PC-9 (cell line): ENCODE measurements at regions of chr2 and their contacts with region 1.

Region 1: DNA sequence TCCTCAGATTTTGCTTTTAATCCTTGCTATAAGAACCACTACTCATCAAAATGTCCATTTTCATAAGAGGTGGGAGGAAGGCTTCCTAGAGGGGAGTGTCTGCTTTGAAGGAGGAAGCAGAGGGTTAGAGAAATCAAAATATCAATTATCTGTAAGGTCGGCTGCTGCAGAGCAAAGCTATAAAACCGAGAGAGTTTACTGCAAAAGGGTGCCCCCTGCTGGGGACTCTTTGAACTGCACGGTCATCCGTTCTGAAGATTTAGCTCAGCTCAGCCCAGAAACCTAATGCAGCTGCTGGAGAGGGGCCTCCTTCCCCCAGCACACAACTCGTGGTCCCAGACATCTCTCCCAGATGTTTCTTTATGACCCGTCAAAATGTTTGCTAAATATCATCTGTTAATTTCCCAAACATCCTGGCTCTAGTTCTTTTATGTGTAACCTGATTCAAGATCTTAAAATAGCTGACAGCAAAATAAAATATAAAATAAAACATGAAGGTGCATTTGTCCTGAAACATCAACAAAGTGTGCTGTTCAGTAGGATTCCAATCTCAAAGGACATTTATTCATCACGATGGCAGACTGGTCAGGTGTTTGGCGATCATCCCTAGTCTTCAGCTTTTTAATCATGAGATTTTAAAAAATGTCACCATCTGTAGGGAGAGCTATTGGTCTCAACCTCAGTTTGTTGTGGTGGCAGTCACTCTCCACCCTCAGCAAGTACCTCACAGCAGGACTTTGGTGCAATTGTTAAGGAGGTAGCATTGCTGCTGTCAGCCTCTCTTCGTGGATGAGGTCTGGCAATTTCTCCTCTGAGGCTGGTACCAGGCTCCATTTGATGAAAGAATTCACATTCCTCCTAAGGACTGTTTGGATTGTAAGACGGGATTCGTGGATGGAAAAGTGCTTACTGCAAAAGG is 185.9 kb downstream of the MTX2 start:
- DNase-seq: peak; percentile 44 to 80
- H3K4me3 ChIP-seq: no peak overlapping the region
- H3K27ac ChIP-seq: no peak overlapping the region
- H3K4me1 ChIP-seq: no peaks in the 10 kb centered on the region
- H3K27me3 ChIP-seq: no peaks in the 10 kb centered on the region
- CTCF ChIP-seq: peak; percentile 100

Region 2: DNA sequence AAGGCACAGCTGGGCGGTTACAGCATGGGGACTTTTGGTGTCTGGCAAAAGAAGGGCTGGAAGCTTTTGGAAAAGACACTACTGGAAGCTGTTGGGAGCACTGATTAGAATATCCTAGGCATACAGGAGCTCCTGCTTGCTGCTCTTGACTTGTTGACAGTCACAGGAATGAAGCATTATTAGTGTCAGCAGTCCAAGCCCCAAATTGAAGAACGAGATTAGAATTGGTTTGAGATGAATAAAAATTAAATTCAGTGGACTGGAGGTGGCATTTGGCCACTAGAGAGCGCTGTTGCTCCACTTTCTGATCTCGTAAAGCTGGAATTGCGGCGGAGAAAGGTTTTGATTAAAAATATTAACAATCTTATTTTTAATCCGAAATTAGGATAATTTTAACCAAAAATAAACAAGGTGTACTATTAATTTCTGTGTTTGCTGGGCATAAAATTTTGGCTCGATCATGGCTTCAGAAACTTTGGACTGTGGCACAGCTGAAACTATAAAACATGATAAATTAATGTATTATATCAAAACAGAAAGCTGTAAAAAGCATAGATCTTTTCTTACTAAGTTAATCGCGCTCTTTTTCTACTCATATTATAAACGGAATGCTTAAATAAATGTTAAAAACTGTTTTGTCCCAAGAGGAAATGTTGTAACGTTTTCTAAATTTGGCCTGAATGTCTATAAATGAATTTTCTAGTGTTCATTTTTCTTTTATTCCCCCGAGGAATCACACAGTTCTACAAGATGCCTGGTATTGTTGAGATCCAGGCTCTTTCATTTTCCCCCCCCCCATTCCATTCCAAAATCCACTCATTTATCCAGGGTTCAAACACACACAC is 328.0 kb before region 1 on chr2:
- CTCF ChIA-PET with region 1: interaction called, 12 read pairs
- POLR2A ChIA-PET with region 1: no interaction called
- intact Hi-C with region 1: loop called (anchors 2 kb)
- DNase-seq: peak; percentile 43 to 67
- H3K4me3 ChIP-seq: 0 out of 2 replicates have a peak overlapping the region, but pooled peaks have one; percentile 3
- H3K27ac ChIP-seq: no peak overlapping the region
- H3K4me1 ChIP-seq: no peaks in the 10 kb centered on the region
- H3K27me3 ChIP-seq: peaks cover 52% of the 10 kb centered on the region
- CTCF ChIP-seq: peak; percentile 100

Region 3: GRCh38 chr2:176140513-176141317 is 314.4 kb before region 1 on chr2:
- CTCF ChIA-PET with region 1: interaction called, 23 read pairs
- POLR2A ChIA-PET with region 1: no interaction called
- intact Hi-C with region 1: no loop called
- DNase-seq: peak in 1 of 2 experiments; percentile 60
- H3K4me3 ChIP-seq: no peak overlapping the region
- H3K27ac ChIP-seq: no peak overlapping the region
- H3K4me1 ChIP-seq: no peaks in the 10 kb centered on the region
- H3K27me3 ChIP-seq: peaks cover 29% of the 10 kb centered on the region; the same call in 1 of the 2 replicates
- CTCF ChIP-seq: peak; percentile 44

Region 4: DNA sequence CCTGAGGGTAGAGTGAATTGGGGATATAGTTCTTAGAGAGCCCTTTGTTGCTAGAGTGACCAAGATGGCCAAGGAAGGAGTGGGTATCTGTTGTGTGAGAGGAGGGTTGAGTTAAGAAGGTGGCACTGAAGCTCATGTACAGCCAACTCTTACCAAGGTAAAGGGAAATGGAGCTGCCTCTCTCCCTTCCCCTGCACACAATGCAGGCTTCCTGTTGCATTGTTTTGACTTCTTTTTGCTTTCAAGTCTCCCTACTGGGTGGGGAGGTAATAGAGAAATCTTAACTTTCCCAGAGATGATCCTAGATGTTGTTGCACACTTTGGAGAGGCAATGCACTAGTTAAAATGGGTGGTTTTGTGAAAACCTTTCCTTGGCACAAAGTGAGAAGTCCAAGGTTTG is 242.9 kb before region 1 on chr2:
- CTCF ChIA-PET with region 1: no interaction called
- POLR2A ChIA-PET with region 1: no interaction called
- intact Hi-C with region 1: loop called (anchors 1 kb)
- DNase-seq: no peak
- H3K4me3 ChIP-seq: no peak overlapping the region
- H3K27ac ChIP-seq: no peak overlapping the region
- H3K4me1 ChIP-seq: no peaks in the 10 kb centered on the region
- H3K27me3 ChIP-seq: peaks cover 15% of the 10 kb centered on the region
- CTCF ChIP-seq: no peak

Region 5: DNA sequence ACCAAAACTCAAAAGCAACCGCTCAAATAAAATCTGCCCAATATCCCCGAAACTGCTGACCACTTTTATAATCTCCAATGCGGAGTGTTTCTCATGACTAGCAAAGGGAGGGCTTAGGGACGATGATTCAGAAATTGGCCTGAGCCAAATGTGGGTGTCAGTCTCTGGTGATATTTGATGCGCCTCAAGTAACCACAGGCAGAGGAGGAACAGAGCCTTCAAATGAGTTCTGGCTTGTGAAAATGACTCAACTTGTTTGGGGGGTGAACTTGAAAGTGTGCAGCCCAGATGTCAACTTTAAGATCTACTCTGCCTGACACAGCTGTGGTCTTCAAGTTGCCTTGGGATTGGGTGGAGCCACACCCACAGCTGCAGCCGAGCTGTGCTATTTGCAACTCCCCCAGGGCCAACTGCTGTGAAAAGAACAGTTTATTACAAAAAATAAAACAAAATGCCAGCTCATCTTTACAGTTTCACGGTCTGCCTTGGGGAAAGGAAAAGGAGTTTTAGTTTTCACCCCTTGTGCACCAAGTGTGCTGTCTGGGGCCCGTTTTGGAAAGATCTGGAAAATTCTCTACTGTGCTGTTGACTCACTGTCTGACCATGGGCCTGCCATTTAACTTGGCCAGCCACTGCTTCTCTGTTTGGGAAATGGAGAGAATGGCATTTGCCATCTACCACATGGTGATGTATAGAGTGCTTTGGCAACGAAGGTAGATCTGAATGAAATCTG is 36.2 kb after region 1 on chr2:
- CTCF ChIA-PET with region 1: interaction called, 10 read pairs
- POLR2A ChIA-PET with region 1: no interaction called
- intact Hi-C with region 1: no loop called
- DNase-seq: peak; percentile 60 to 78
- H3K4me3 ChIP-seq: no peak overlapping the region
- H3K27ac ChIP-seq: no peak overlapping the region
- H3K4me1 ChIP-seq: no peaks in the 10 kb centered on the region
- H3K27me3 ChIP-seq: peaks cover 8% of the 10 kb centered on the region; the same call in 1 of the 2 replicates
- CTCF ChIP-seq: no peak